ENCODE measurements at regions of chrX and their contacts with region 1.

Region 1: GRCh38 chrX:72100824-72101351 is 30.8 kb downstream of the RTL5 start:
- DNase-seq: peak; percentile 77
- H3K4me3 Mint-ChIP-seq: no peak overlapping the region
- H3K27ac Mint-ChIP-seq: no peak overlapping the region
- H3K4me1 Mint-ChIP-seq: peaks cover 31% of the 10 kb centered on the region
- H3K27me3 Mint-ChIP-seq: peaks cover 17% of the 10 kb centered on the region

Region 2: DNA sequence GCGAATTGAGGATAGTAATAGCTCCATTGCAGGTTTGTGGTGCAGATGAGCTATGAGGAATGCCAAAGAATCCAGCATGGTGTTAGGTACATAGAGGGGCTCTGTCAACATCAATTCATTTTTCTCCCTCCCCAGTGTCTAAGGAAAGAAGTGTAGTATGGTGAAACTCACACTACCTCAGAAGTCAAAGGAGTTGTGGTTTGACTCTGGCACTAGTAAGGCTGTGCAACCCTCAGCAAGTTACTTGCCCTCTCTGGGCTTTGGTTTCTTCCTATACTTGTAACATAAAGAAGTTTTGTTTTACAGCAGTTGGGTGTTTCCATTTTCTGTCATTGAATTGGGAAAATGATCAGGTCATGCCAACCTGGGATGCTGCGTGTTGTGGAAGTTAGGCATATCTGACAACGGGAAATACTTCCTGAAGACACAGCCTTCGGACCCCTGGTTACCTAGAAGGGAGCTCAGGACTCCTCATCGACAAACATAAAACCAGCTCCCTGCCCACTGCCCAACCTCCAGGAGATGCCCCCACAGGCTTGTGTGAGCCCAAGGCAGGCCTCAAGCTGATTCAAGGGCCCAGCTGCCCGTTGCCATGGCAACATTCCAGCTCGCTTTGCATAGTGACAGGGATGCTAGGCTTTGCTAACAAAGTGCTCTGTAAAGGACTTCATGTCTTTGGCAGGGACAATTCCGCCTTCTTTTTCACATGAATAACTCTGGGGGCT is 40.5 kb before region 1 on chrX:
- CTCF ChIA-PET with region 1: no interaction called
- intact Hi-C with region 1: no loop called
- DNase-seq: no peak
- H3K4me3 Mint-ChIP-seq: no peak overlapping the region
- H3K27ac Mint-ChIP-seq: no peak overlapping the region
- H3K4me1 Mint-ChIP-seq: no peaks in the 10 kb centered on the region
- H3K27me3 Mint-ChIP-seq: no peaks in the 10 kb centered on the region

Region 3: DNA sequence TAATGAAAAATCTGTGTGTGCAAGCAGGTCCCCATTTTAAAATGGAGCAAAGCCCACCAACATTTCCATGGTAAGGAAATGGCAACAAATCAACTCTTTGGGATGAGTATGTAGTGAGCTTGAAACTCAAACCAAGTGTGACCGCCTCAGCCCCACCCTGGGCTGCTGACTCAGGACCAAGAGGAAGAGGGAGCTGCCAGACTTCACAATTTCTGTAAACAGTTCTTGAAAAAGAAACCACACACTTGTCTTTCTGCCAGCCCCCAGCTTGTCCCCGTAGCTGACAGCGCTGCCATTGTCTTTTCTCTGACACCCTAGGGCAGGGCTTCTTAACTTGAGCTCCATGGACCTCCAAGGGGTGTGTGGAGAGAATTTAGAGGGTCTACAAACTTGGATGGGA is 20.5 kb after region 1 on chrX:
- CTCF ChIA-PET with region 1: no interaction called
- intact Hi-C with region 1: loop called (anchors 2 kb)
- DNase-seq: peak; percentile 51
- H3K4me3 Mint-ChIP-seq: no peak overlapping the region
- H3K27ac Mint-ChIP-seq: no peak overlapping the region
- H3K4me1 Mint-ChIP-seq: peaks cover 9% of the 10 kb centered on the region
- H3K27me3 Mint-ChIP-seq: peaks cover 3% of the 10 kb centered on the region

Region 4: GRCh38 chrX:72142094-72142793 is 41.4 kb after region 1 on chrX:
- CTCF ChIA-PET with region 1: no interaction called
- intact Hi-C with region 1: loop called (anchors 1 kb)
- DNase-seq: no peak
- H3K4me3 Mint-ChIP-seq: no peak overlapping the region
- H3K27ac Mint-ChIP-seq: no peak overlapping the region
- H3K4me1 Mint-ChIP-seq: peaks cover 18% of the 10 kb centered on the region
- H3K27me3 Mint-ChIP-seq: no peaks in the 10 kb centered on the region

Measured in activated naive CD4-positive, alpha-beta T cell treated with anti-CD3 and anti-CD28 coated beads for 36 hours (primary cell).